ENCODE measurements at regions of chr1 and their contacts with region 1.

Region 1: DNA sequence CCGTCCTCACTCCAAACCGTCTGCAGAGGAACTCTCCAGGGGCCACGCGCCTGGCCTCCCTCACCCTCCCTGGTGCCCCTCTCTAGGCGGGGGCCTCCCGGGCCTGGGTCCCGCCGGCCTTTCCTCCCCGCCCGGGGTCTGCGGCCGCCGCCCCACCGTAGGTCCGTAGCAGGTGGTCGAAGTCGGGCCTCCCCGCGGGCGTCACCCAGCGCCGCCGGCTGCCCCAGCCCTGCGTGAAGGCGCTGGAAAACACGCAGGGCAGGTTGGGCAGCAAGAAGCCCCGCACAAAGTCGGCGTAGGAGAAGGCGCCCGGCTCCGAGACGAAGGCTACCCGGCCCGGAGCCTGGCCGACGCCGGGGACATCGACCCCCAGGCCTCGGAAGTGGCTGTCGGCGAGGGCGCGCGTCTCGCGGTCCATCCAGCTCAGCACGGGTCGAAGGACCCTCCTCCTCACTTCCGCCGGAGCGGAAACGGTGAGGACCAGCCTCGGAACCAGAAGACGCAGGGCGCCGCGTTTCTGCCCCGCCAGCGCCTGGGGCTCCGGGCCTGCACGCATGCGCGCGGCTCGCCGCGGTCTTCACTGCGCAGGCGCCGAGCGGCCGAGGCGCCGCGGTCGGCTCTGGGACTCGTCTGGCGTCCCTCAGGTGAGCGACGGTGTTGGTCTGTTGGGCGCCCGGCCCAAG is at the starts of genes JMJD4 and SNAP47:
- DNase-seq: peak; percentile 86
- H3K4me3 ChIP-seq: peak within 1 kb of the TSS; percentile 90 to 93
- H3K27ac ChIP-seq: peak within 1 kb of the TSS; percentile 83 to 89
- H3K4me1 ChIP-seq: no peaks in the 10 kb centered on the region
- H3K27me3 ChIP-seq: no peaks in the 10 kb centered on the region
- CTCF ChIP-seq: peak in 2 of 4 experiments; percentile 24 to 27
- POLR2A ChIP-seq: peak; percentile 76
- total RNA-seq, gene JMJD4: 29.8 to 38.3 TPM
- total RNA-seq, gene SNAP47: 51.6 to 74.7 TPM

Region 2: GRCh38 chr1:227563324-227564201 is 171.4 kb before region 1 on chr1 and contains the start of gene ZNF678:
- intact Hi-C with region 1: loop called (anchors 5 kb)
- DNase-seq: peak; percentile 93
- H3K4me3 ChIP-seq: peak within 1 kb of the TSS; percentile 54 to 63
- H3K27ac ChIP-seq: peak within 1 kb of the TSS; percentile 88 to 93
- H3K4me1 ChIP-seq: no peaks in the 10 kb centered on the region
- H3K27me3 ChIP-seq: no peaks in the 10 kb centered on the region
- CTCF ChIP-seq: peak in 1 of 4 experiments; percentile 6
- POLR2A ChIP-seq: no peak
- total RNA-seq, gene ZNF678: 17.0 to 21.4 TPM

Region 3: DNA sequence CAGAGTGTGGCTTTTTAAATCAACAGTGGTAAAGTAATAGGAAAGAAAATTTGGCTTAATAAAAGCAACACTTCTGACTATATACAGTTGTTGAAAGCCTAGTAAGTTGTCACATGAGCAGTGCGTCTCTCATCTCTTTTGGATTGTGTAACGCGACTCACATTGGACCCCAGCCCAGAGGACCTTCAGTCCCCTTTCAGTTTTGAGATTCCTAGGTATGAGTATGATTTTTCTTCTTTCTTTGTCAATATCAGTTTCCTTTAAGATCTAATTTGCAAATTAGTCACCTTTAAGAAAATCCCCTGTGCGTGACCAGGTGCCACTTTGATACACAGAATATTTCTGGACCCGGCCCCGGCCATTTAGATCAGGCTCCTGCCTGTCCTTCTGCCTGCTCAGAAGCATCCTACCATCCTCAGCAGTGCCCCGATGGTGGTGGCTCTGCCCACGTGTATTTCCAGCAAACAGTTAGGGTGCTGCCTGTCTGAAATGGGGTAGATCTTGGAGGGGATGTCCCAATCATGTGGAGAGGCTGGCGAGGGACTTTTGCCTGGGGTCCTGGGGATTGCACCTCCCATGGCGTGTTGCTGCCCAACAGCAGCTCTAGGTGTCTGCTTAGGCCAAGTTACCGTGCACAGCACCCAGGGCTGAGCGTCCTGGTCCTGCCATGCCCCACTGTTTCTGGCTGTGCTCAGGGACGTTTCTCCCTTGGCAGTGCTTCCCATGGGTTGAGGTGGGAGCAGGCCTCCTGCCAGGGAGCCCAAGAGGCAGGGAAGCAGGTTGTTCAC is 21.4 kb after region 1 on chr1:
- intact Hi-C with region 1: loop called (anchors 2 kb)
- DNase-seq: no peak
- H3K4me3 ChIP-seq: no peak overlapping the region
- H3K27ac ChIP-seq: no peak overlapping the region
- H3K4me1 ChIP-seq: no peaks in the 10 kb centered on the region
- H3K27me3 ChIP-seq: no peaks in the 10 kb centered on the region
- CTCF ChIP-seq: no peak
- POLR2A ChIP-seq: no peak